Activated CD8-positive, alpha-beta T cell treated with anti-CD3 and anti-CD28 coated beads, Interleukin-2, amount 10 ng/mL, durations not matched to agents 7 days and 5 days (primary cell): ENCODE measurements at regions of chr2 and their contacts with region 1.

Region 1: DNA sequence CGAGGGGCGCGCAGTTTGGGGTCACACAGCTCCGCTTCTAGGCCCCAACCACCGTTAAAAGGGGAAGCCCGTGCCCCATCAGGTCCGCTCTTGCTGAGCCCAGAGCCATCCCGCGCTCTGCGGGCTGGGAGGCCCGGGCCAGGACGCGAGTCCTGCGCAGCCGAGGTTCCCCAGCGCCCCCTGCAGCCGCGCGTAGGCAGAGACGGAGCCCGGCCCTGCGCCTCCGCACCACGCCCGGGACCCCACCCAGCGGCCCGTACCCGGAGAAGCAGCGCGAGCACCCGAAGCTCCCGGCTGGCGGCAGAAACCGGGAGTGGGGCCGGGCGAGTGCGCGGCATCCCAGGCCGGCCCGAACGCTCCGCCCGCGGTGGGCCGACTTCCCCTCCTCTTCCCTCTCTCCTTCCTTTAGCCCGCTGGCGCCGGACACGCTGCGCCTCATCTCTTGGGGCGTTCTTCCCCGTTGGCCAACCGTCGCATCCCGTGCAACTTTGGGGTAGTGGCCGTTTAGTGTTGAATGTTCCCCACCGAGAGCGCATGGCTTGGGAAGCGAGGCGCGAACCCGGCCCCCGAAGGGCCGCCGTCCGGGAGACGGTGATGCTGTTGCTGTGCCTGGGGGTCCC is at the start of gene ITGA4:
- DNase-seq: peak; percentile 91
- ATAC-seq: peak; percentile 82
- H3K4me3 Mint-ChIP-seq: peak within 1 kb of the TSS; percentile 89
- H3K27ac Mint-ChIP-seq: peak within 1 kb of the TSS; percentile 89
- H3K4me1 Mint-ChIP-seq: peaks cover 34% of the 10 kb centered on the region
- H3K27me3 Mint-ChIP-seq: no peaks in the 10 kb centered on the region
- total RNA-seq, gene ITGA4: 144 to 152 TPM

Region 2: GRCh38 chr2:181123798-181124231 is 333.4 kb before region 1 on chr2:
- CTCF ChIA-PET with region 1: interaction called, 14 read pairs
- POLR2A ChIA-PET with region 1: interaction called, 78 read pairs
- DNase-seq: peak; percentile 85
- ATAC-seq: peak; percentile 94
- H3K4me3 Mint-ChIP-seq: peak overlapping the region; percentile 77
- H3K27ac Mint-ChIP-seq: peak overlapping the region; percentile 86
- H3K4me1 Mint-ChIP-seq: peaks cover 70% of the 10 kb centered on the region
- H3K27me3 Mint-ChIP-seq: no peaks in the 10 kb centered on the region

Region 3: DNA sequence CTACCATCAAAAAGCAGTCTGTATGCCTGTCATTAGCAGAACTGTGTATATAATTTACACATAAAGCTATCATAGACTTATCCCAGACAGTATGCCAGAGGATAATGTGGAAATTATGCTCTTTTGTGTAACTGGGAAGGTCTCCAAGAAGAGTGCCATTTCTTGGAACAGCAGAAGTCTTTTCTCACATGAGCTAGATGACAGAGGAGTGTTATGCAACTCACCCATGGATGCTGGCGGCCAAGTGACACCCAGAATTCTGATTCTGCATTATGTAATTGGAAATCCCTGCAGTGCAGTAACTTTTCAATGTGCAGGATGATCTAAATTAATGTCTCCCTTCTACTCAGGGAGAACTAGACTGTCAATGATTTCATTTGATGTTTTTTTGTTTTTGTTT is 316.8 kb before region 1 on chr2:
- CTCF ChIA-PET with region 1: interaction called, 3 read pairs
- POLR2A ChIA-PET with region 1: interaction called, 30 read pairs
- DNase-seq: no peak
- ATAC-seq: no peak
- H3K4me3 Mint-ChIP-seq: peak overlapping the region; percentile 65
- H3K27ac Mint-ChIP-seq: peak overlapping the region; percentile 92
- H3K4me1 Mint-ChIP-seq: peaks cover 72% of the 10 kb centered on the region
- H3K27me3 Mint-ChIP-seq: no peaks in the 10 kb centered on the region

Region 4: GRCh38 chr2:181289698-181290097 is 167.5 kb before region 1 on chr2:
- CTCF ChIA-PET with region 1: interaction called, 10 read pairs
- POLR2A ChIA-PET with region 1: interaction called, 6 read pairs
- DNase-seq: no peak
- ATAC-seq: peak; percentile 70
- H3K4me3 Mint-ChIP-seq: no peak overlapping the region
- H3K27ac Mint-ChIP-seq: no peak overlapping the region
- H3K4me1 Mint-ChIP-seq: peaks cover 9% of the 10 kb centered on the region
- H3K27me3 Mint-ChIP-seq: no peaks in the 10 kb centered on the region

Region 5: DNA sequence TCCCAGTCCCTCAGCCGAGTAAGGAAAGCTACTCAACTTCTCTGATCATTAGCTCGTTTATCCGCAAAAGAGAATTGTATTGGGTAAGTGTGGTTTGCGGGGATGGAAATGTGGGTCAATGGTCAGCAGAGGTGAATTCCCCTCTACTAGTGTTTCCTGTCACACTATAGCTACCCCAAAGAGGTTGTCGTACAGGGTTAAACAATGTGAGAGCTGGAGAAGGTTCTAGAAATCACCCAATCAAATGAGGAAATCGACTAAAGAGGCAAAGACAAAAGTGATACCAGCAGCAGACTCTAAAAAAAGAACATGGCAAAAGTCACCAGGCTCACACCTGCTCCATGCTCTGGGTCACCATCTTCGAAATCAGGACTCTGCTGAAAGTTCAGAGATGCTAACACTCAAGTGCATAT is 144.7 kb before region 1 on chr2:
- CTCF ChIA-PET with region 1: interaction called, 35 read pairs
- POLR2A ChIA-PET with region 1: interaction called, 249 read pairs
- DNase-seq: peak; percentile 65
- ATAC-seq: peak; percentile 65
- H3K4me3 Mint-ChIP-seq: peak overlapping the region; percentile 67
- H3K27ac Mint-ChIP-seq: peak overlapping the region; percentile 96
- H3K4me1 Mint-ChIP-seq: peaks cover 53% of the 10 kb centered on the region
- H3K27me3 Mint-ChIP-seq: no peaks in the 10 kb centered on the region

Region 6: GRCh38 chr2:181444654-181445053 is 12.6 kb before region 1 on chr2:
- CTCF ChIA-PET with region 1: interaction called, 20 read pairs
- POLR2A ChIA-PET with region 1: interaction called, 5 read pairs
- DNase-seq: no peak
- ATAC-seq: no peak
- H3K4me3 Mint-ChIP-seq: no peak overlapping the region
- H3K27ac Mint-ChIP-seq: no peak overlapping the region
- H3K4me1 Mint-ChIP-seq: peaks cover 28% of the 10 kb centered on the region
- H3K27me3 Mint-ChIP-seq: no peaks in the 10 kb centered on the region